ENCODE measurements at regions of chr1 and their contacts with region 1.

Region 1: GRCh38 chr1:228224198-228225164 is 16.6 kb downstream of the OBSCN start:
- DNase-seq: no peak
- H3K4me3 ChIP-seq: no peak overlapping the region
- CTCF ChIP-seq: no peak

Region 2: GRCh38 chr1:228212966-228213844 is 11.3 kb before region 1 on chr1:
- CTCF ChIA-PET with region 1: interaction called, 15 read pairs
- POLR2A ChIA-PET with region 1: no interaction called
- DNase-seq: no peak
- H3K4me3 ChIP-seq: peak overlapping the region; percentile 61
- CTCF ChIP-seq: peak; percentile 87